ENCODE measurements at regions of chr1 and their contacts with region 1.

Region 1: DNA sequence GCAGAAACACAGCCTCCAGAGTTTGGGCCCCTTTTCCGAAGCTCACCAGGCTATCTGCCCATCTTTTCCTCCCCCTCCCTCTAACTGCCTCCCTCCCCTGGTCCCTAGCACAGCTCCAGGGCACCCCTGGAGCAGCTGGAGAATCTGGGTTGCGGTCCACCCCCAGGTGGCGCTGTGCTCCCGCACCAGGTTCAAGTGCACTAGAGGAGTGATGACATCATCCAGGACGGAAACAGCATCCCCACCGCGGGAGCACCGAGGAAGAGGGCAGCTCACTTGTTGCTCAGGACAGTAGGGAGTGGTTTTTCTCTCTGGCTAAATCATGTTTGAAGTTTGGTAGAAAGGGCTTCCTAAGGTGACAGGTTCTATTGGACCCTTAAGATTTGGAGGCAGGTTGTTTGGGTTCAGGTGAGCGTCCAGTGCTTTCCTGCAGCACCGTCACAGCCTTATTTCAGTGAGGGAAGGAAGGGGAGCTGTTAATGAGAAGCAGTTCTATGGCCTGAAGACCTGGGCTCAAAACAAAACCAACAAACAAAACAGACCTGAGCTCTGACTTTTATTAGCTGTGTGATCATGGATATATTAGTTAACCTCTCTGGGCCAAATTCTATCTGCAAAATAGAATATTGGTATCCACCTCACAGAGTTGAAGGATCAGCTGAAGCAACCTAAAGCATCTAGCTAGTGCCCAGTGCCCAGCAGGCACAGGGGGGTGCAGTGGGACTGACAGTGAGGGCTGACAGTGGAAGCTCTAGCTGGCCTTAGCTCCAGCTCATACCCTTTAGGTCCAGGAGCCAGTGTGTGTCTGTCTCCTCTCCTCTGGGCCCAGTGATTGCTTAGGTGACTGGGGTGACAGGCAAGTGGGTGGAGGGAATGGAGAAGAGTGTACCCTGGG is 7.5 kb downstream of the SHISA4 start:
- DNase-seq: peak; percentile 72 to 83 (median 75)
- H3K4me3 ChIP-seq: no peak overlapping the region
- H3K4me3 Mint-ChIP-seq: peak overlapping the region in 7 of 8 donors; percentile 28 to 74 (median 68)
- H3K27ac ChIP-seq: no peak overlapping the region
- H3K27ac Mint-ChIP-seq: peak overlapping the region; percentile 10 to 90 (median 74)
- H3K4me1 ChIP-seq: peaks cover 7% of the 10 kb centered on the region
- H3K4me1 Mint-ChIP-seq: peaks cover 5 to 7% (median 6%) of the 10 kb centered on the region in 4 donors
- H3K27me3 ChIP-seq: peaks cover under 1% of the 10 kb centered on the region
- H3K27me3 Mint-ChIP-seq: peaks cover 9 to 29% of the 10 kb centered on the region in 2 donors

Region 2: GRCh38 chr1:201877877-201878401 is 18.2 kb before region 1 on chr1:
- CTCF ChIA-PET with region 1: interaction called, 91 read pairs
- POLR2A ChIA-PET with region 1: no interaction called
- intact Hi-C with region 1: no loop called
- DNase-seq: peak in 3 of 5 donors; percentile 7 to 22 (median 12)
- H3K4me3 ChIP-seq: no peak overlapping the region
- H3K4me3 Mint-ChIP-seq: no peak overlapping the region
- H3K27ac ChIP-seq: no peak overlapping the region
- H3K27ac Mint-ChIP-seq: peak overlapping the region in 1 of 7 donors; percentile 32
- H3K4me1 ChIP-seq: no peaks in the 10 kb centered on the region
- H3K4me1 Mint-ChIP-seq: peaks cover 0 to 4% (median 0%) of the 10 kb centered on the region in 4 donors
- H3K27me3 ChIP-seq: no peaks in the 10 kb centered on the region
- H3K27me3 Mint-ChIP-seq: no peaks in the 10 kb centered on the region

Region 3: GRCh38 chr1:201970334-201971159 is 74.4 kb after region 1 on chr1:
- CTCF ChIA-PET with region 1: interaction called, 104 read pairs
- POLR2A ChIA-PET with region 1: interaction called, 9 read pairs
- intact Hi-C with region 1: loop called (anchors 1 kb)
- DNase-seq: no peak
- H3K4me3 ChIP-seq: no peak overlapping the region
- H3K4me3 Mint-ChIP-seq: no peak overlapping the region
- H3K27ac ChIP-seq: no peak overlapping the region
- H3K27ac Mint-ChIP-seq: peak overlapping the region in 1 of 7 donors; percentile 29
- H3K4me1 ChIP-seq: no peaks in the 10 kb centered on the region
- H3K4me1 Mint-ChIP-seq: peaks cover 0 to 1% (median 0%) of the 10 kb centered on the region in 4 donors
- H3K27me3 ChIP-seq: no peaks in the 10 kb centered on the region
- H3K27me3 Mint-ChIP-seq: peaks cover 0 to 1% of the 10 kb centered on the region in 2 donors

Region 4: DNA sequence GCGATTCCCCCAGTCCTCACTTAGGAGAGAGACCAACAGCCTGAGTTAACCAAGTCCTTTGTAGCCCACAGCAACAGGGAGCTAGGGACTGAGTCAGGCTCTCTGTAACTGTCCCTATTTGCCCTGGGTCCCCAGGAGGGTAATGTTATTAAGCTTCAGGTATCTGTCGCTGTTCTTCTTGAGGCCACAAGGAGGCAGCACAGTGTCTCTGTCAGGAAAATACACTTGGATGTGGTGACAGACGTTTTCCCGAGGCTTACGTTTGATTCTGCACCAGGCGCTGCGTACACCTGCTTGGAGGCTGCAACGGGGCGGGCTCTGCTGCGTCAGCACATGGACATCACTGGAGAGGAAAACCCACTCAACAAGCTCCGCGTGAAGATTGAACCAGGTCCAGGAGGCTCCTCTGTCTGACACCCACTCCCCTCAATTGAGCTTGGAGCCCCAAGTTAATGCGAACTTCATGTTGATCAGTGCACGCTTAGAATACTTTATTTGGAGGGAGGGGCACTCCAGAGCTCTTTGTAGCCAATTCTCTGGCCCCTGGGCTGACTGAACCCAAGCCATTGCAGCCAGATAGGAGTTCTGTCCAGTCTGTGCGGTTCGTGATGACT is 103.6 kb after region 1 on chr1:
- CTCF ChIA-PET with region 1: interaction called, 18 read pairs
- POLR2A ChIA-PET with region 1: no interaction called
- intact Hi-C with region 1: no loop called
- DNase-seq: peak in 4 of 5 donors; percentile 18 to 24 (median 22)
- H3K4me3 ChIP-seq: no peak overlapping the region
- H3K4me3 Mint-ChIP-seq: no peak overlapping the region
- H3K27ac ChIP-seq: no peak overlapping the region
- H3K27ac Mint-ChIP-seq: no peak overlapping the region
- H3K4me1 ChIP-seq: no peaks in the 10 kb centered on the region
- H3K4me1 Mint-ChIP-seq: no peaks in the 10 kb centered on the region
- H3K27me3 ChIP-seq: no peaks in the 10 kb centered on the region
- H3K27me3 Mint-ChIP-seq: no peaks in the 10 kb centered on the region